Ascending aorta (tissue), 2 donors: ENCODE measurements at regions of chr7 and their contacts with region 1.

Region 1: DNA sequence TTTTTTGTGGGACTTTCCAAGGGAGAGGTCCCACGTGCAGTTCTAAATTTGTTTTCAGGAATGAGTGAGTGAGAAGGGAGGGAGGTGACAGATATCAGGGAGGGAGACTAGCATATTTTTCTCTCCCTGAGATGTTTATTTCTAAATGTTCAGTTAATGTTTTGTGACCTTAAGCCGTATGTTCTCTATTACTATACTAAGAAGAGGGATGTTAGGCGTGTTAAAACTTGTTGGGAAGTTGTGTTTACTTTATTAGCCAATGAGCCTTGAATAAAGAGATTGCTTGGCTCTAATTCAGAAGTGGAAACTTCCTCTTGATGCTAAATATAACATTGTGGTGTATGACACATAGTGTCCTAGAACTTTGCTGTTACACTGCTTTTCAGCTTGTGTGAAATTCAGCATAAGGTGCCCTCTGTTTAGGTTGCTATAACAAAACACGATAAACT is 37.3 kb downstream of the DNAH11 start:
- DNase-seq: no peak
- H3K4me3 ChIP-seq: no peak overlapping the region
- H3K27ac ChIP-seq: peak overlapping the region in 1 of 2 donors; percentile 19
- H3K4me1 ChIP-seq: no peaks in the 10 kb centered on the region
- H3K27me3 ChIP-seq: no peaks in the 10 kb centered on the region
- CTCF ChIP-seq: no peak

Region 2: GRCh38 chr7:21617916-21618390 is 37.9 kb after region 1 on chr7:
- intact Hi-C with region 1: loop called (anchors 5 kb)
- DNase-seq: peak in 1 of 2 donors; percentile 77
- H3K4me3 ChIP-seq: no peak overlapping the region
- H3K27ac ChIP-seq: no peak overlapping the region
- H3K4me1 ChIP-seq: no peaks in the 10 kb centered on the region
- H3K27me3 ChIP-seq: no peaks in the 10 kb centered on the region
- CTCF ChIP-seq: no peak